ENCODE measurements at regions of chr16 and their contacts with region 1.

Region 1: DNA sequence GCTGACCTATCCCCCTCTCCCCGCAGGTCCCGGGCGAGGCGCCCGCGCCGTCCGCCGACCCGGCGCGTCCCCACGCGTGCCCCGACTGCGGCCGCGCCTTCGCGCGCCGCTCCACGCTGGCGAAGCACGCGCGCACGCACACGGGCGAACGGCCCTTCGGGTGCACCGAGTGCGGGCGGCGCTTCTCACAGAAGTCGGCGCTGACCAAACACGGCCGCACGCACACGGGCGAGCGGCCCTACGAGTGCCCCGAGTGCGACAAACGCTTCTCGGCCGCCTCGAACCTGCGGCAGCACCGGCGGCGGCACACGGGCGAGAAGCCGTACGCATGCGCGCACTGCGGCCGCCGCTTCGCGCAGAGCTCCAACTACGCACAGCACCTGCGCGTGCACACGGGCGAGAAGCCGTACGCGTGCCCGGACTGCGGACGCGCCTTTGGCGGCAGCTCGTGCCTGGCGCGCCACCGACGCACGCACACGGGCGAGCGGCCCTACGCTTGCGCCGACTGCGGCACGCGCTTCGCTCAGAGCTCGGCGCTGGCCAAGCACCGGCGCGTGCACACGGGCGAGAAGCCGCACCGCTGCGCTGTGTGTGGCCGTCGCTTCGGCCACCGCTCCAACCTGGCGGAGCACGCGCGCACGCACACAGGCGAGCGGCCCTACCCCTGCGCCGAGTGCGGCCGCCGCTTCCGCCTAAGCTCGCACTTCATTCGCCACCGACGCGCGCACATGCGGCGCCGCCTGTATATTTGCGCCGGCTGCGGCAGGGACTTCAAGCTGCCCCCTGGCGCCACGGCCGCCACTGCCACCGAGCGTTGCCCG is 10.3 kb downstream of the ZNF771 start:
- DNase-seq: peak; percentile 78 to 89
- ATAC-seq: peak; percentile 92 to 96 (median 94)
- H3K4me3 ChIP-seq: peak overlapping the region; percentile 20 to 77 (median 65)
- H3K27ac ChIP-seq: peak overlapping the region; percentile 58 to 91 (median 78)
- H3K4me1 ChIP-seq: peaks cover 3 to 17% (median 11%) of the 10 kb centered on the region in 9 donors
- H3K27me3 ChIP-seq: no peaks in the 10 kb centered on the region
- CTCF ChIP-seq: peak in 6 of 9 donors; percentile 14 to 51 (median 36)

Region 2: GRCh38 chr16:30355144-30355894 is 62.4 kb before region 1 on chr16 and contains the start of gene CD2BP2:
- intact Hi-C with region 1: loop called in 1 of 10 experiments (anchors 10 kb)
- DNase-seq: peak; percentile 92 to 98
- ATAC-seq: peak; percentile 87 to 96 (median 95)
- H3K4me3 ChIP-seq: peak within 1 kb of the TSS; percentile 47 to 99 (median 82)
- H3K27ac ChIP-seq: peak within 1 kb of the TSS; percentile 70 to 99 (median 97)
- H3K4me1 ChIP-seq: peaks cover 26 to 51% (median 40%) of the 10 kb centered on the region in 9 donors
- H3K27me3 ChIP-seq: no peaks in the 10 kb centered on the region
- CTCF ChIP-seq: no peak
- total RNA-seq, gene CD2BP2: 34.9 to 48.8 (median 38.8) TPM

Region 3: GRCh38 chr16:30609926-30610839 is 192.4 kb after region 1 on chr16 and contains the start of gene ZNF689:
- intact Hi-C with region 1: loop called in 1 of 10 experiments (anchors 10 kb)
- DNase-seq: peak; percentile 91 to 96
- ATAC-seq: peak; percentile 96 to 99 (median 99)
- H3K4me3 ChIP-seq: peak within 1 kb of the TSS; percentile 51 to 98 (median 93)
- H3K27ac ChIP-seq: peak within 1 kb of the TSS; percentile 66 to 99 (median 98)
- H3K4me1 ChIP-seq: peaks cover 0 to 33% (median 15%) of the 10 kb centered on the region in 9 donors
- H3K27me3 ChIP-seq: no peaks in the 10 kb centered on the region
- CTCF ChIP-seq: no peak
- total RNA-seq, gene ZNF689: 4.0 to 7.4 (median 5.6) TPM

Measured in heart right ventricle (tissue), 16 donors.